Activated naive CD4-positive, alpha-beta T cell treated with anti-CD3 and anti-CD28 coated beads for 36 hours (primary cell): ENCODE measurements at regions of chr5 and their contacts with region 1.

Region 1: GRCh38 chr5:74640450-74640953 is at the start of gene ENC1:
- DNase-seq: peak; percentile 79
- H3K4me3 Mint-ChIP-seq: peak within 1 kb of the TSS; percentile 80
- H3K27ac Mint-ChIP-seq: no peak within 1 kb of the TSS
- H3K4me1 Mint-ChIP-seq: peaks cover 26% of the 10 kb centered on the region
- H3K27me3 Mint-ChIP-seq: peaks cover 22% of the 10 kb centered on the region
- total RNA-seq, gene ENC1: 0.74 to 0.86 TPM

Region 2: GRCh38 chr5:73792687-73793320 is 847.7 kb before region 1 on chr5:
- CTCF ChIA-PET with region 1: no interaction called
- intact Hi-C with region 1: loop called (anchors 10 kb)
- DNase-seq: peak; percentile 80
- H3K4me3 Mint-ChIP-seq: no peak overlapping the region
- H3K27ac Mint-ChIP-seq: no peak overlapping the region
- H3K4me1 Mint-ChIP-seq: peaks cover 9% of the 10 kb centered on the region
- H3K27me3 Mint-ChIP-seq: peaks cover 30% of the 10 kb centered on the region

Region 3: DNA sequence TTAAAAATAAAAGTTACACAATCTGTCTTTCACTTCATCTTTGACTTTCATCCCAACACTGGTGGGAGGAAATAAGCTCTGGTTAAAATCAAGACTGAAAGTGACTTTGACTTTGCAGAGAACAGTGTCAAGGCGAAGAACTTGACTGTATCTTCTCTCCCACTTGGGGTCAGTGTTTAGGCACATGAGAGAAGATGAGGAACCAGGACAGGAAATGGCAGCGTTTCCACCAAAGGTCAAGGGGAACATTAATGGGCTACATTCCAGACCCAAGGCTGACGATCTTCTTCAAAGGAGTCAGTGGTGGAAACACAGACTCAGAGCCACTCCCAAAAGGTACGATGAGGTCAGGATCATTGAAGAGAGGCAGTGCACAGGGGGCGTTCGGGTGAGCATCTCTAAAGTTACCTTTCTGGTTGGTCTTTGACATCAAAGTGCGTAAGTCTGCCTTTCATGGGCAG is 605.0 kb before region 1 on chr5:
- CTCF ChIA-PET with region 1: no interaction called
- intact Hi-C with region 1: loop called (anchors 5 kb)
- DNase-seq: no peak
- H3K4me3 Mint-ChIP-seq: no peak overlapping the region
- H3K27ac Mint-ChIP-seq: no peak overlapping the region
- H3K4me1 Mint-ChIP-seq: peaks cover 4% of the 10 kb centered on the region
- H3K27me3 Mint-ChIP-seq: no peaks in the 10 kb centered on the region

Region 4: GRCh38 chr5:74316064-74316679 is 324.3 kb before region 1 on chr5:
- CTCF ChIA-PET with region 1: no interaction called
- intact Hi-C with region 1: loop called (anchors 5 kb)
- DNase-seq: peak; percentile 52
- H3K4me3 Mint-ChIP-seq: no peak overlapping the region
- H3K27ac Mint-ChIP-seq: no peak overlapping the region
- H3K4me1 Mint-ChIP-seq: peaks cover 9% of the 10 kb centered on the region
- H3K27me3 Mint-ChIP-seq: peaks cover 18% of the 10 kb centered on the region

Region 5: DNA sequence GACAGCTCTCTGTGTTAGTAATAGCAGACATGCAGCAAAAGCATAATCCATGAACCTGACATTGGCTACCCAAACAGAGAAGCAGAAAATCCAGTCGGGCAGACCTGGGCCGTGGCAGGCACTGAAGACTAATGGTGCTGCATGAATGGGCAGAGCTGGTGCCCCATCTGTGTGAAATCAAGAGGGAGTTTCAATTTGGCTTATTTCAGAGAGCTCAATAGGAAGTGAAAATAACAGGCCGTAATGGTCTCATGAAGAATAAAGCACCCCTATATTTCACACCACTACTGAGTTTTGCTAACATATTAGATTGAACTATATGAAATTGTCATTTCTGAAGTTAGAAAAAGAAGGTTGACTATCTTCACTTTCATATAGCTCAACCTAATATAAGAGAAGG is 149.7 kb before region 1 on chr5:
- CTCF ChIA-PET with region 1: interaction called, 3 read pairs
- intact Hi-C with region 1: loop called (anchors 10 kb)
- DNase-seq: no peak
- H3K4me3 Mint-ChIP-seq: no peak overlapping the region
- H3K27ac Mint-ChIP-seq: no peak overlapping the region
- H3K4me1 Mint-ChIP-seq: no peaks in the 10 kb centered on the region
- H3K27me3 Mint-ChIP-seq: peaks cover 5% of the 10 kb centered on the region

Region 6: GRCh38 chr5:74622122-74622521 is 18.4 kb before region 1 on chr5:
- CTCF ChIA-PET with region 1: interaction called, 6 read pairs
- intact Hi-C with region 1: loop called (anchors 1 kb)
- DNase-seq: peak; percentile 59
- H3K4me3 Mint-ChIP-seq: no peak overlapping the region
- H3K27ac Mint-ChIP-seq: no peak overlapping the region
- H3K4me1 Mint-ChIP-seq: peaks cover 14% of the 10 kb centered on the region
- H3K27me3 Mint-ChIP-seq: peaks cover 34% of the 10 kb centered on the region